HepG2 (cell line): ENCODE measurements at regions of chr10 and their contacts with region 1.

Region 1: DNA sequence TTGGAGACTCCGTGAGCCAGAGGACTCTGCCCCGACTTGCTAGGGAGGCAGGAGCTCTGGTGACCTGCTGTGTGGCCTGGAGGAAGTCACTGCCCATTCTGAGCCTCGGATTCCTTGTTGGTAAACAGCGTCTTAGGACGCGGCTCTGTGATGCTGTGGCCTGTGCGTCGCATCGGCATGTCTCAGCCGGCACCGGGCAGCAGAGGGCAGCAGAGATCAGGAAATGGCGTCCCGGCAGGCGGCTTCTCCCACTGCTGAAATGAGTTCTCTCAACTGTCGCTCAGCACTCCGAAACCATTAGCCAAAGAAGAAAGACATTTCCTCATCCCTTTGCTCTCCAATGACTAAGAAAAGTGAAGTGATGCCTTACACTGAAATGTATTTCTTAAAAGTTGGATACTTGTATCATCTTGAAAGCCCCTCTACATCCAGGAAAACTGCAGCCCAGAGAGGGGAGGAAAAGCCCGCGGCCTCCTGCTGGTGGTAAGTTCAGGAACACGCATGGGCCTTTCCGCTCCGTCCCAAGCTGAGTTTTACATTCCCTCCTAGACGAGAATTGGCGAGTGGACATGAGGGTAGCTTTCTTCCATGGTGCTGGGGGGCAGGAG is 91.7 kb downstream of the WDR11 start:
- DNase-seq: peak; percentile 32
- ATAC-seq: peak; percentile 92
- H3K4me3 ChIP-seq: peak overlapping the region in 1 of 3 experiments; percentile 29; a peak in 2 of 6 replicates
- H3K27ac ChIP-seq: no peak overlapping the region
- H3K4me1 ChIP-seq: no peaks in the 10 kb centered on the region
- H3K27me3 ChIP-seq: no peaks in the 10 kb centered on the region; a peak in 1 of 5 replicates
- CTCF ChIP-seq: peak; percentile 98
- EP300 ChIP-seq: no peak
- POLR2A ChIP-seq: no peak
- RAD21 ChIP-seq: peak; percentile 92

Region 2: DNA sequence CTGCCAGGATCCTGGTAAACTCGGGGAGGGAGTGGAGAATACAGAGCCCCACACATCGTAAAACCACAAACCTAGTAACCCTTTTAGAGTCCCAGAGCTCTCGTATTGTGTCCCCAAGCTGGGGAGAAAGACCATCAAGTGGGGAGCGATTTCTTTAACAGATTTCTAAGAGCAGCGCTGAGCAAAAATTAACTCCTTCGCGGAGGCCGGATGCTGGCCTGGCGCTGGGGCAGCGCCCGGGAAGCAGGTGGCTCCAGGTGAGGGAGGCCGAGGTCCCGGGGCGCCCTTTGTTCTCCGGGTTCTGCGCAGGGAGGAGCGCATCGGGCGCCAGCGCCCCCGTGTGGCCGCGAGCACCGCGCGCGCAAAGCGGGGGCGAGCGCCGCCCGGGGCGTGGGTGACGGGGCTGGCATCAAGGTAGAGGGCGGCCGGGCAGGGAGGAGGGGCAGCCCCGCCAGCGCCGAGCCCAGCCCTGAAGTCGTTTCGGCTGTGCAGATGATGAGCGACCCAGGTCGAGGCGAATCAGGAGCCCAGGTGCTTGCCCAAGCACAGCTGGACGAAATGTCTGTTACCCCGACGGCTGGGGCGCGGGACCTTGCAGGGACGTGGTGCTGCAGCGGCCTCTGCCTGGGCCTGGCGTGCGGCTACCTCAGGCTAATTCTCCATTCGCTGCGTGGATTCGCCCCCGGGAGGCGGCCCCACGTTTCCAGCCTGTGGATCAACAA is 665.7 kb after region 1 on chr10:
- CTCF ChIA-PET with region 1: interaction called, 7 read pairs
- POLR2A ChIA-PET with region 1: no interaction called
- in situ Hi-C with region 1: loop called (anchors 5 kb)
- intact Hi-C with region 1: loop called (anchors 2 kb)
- DNase-seq: peak; percentile 13
- ATAC-seq: peak; percentile 92
- H3K4me3 ChIP-seq: peak overlapping the region; percentile 8 to 64 (median 38); a peak in 4 of 6 replicates
- H3K27ac ChIP-seq: no peak overlapping the region
- H3K4me1 ChIP-seq: peaks cover 24% of the 10 kb centered on the region
- H3K27me3 ChIP-seq: peaks cover 0 to 2% of the 10 kb centered on the region in 2 experiments; a peak in 3 of 5 replicates
- CTCF ChIP-seq: peak; percentile 82
- EP300 ChIP-seq: no peak
- POLR2A ChIP-seq: no peak
- RAD21 ChIP-seq: peak; percentile 91

Region 3: GRCh38 chr10:121734589-121735045 is 791.7 kb after region 1 on chr10:
- CTCF ChIA-PET with region 1: interaction called, 14 read pairs
- POLR2A ChIA-PET with region 1: no interaction called
- in situ Hi-C with region 1: loop called (anchors 5 kb)
- intact Hi-C with region 1: loop called (anchors 1 kb)
- DNase-seq: peak; percentile 28
- ATAC-seq: peak; percentile 81
- H3K4me3 ChIP-seq: peak overlapping the region; percentile 11 to 62 (median 48); a peak in 5 of 6 replicates
- H3K27ac ChIP-seq: no peak overlapping the region
- H3K4me1 ChIP-seq: peaks cover 16% of the 10 kb centered on the region
- H3K27me3 ChIP-seq: peaks cover 0 to 8% of the 10 kb centered on the region in 2 experiments; a peak in 1 of 5 replicates
- CTCF ChIP-seq: peak; percentile 67
- EP300 ChIP-seq: no peak
- POLR2A ChIP-seq: no peak
- RAD21 ChIP-seq: no peak

Region 4: DNA sequence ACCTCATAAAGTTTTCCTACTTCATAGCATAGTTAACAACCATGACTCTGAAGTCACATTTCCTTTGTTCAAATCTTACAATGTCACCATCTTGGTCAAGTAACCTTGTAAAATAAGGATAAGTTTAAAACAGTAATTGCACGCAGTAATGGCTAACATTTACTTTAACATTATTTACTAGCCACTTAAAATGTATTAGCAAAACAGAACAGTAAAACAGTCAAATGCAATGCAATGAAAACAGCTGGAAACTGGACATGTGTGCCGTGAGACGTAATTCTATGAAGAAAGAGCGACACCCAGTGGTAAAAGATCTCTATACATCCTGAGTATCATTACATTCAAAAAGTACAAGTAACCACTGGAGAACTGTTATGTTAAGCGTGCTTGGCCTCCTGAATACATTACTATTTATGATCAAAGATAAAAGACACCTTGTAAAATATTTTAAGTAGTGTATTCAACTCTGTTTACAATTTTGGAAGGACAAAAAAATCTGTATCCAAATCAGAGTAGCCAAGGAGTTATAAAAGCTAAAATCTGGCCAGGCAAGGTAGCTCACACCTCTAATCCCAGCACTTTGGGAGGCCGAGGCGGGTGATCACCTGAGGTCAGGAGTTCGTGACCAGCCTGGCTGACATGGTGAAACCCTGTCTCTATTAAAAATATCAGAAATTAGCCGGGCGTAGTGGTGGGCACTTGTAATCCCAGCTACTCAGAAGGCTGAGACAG is 957.7 kb after region 1 on chr10:
- CTCF ChIA-PET with region 1: no interaction called
- POLR2A ChIA-PET with region 1: no interaction called
- in situ Hi-C with region 1: no loop called
- intact Hi-C with region 1: loop called (anchors 5 kb)
- DNase-seq: peak; percentile 62
- ATAC-seq: peak; percentile 83
- H3K4me3 ChIP-seq: no peak overlapping the region
- H3K27ac ChIP-seq: no peak overlapping the region
- H3K4me1 ChIP-seq: peaks cover 15% of the 10 kb centered on the region
- H3K27me3 ChIP-seq: no peaks in the 10 kb centered on the region
- CTCF ChIP-seq: peak; percentile 74
- EP300 ChIP-seq: no peak
- POLR2A ChIP-seq: no peak
- RAD21 ChIP-seq: peak; percentile 46; the same call in 1 of the 2 replicates